MCF 10A (cell line): ENCODE measurements at regions of chr20 and their contacts with region 1.

Region 1: GRCh38 chr20:47501483-47502270 is at the start of gene NCOA3:
- DNase-seq: peak; percentile 95
- H3K4me3 Mint-ChIP-seq: peak within 1 kb of the TSS; percentile 94
- H3K27ac Mint-ChIP-seq: peak within 1 kb of the TSS; percentile 95
- H3K4me1 Mint-ChIP-seq: peaks cover 24% of the 10 kb centered on the region
- H3K27me3 Mint-ChIP-seq: no peaks in the 10 kb centered on the region
- CTCF ChIP-seq: peak; percentile 41
- total RNA-seq, gene NCOA3: 61.4 and 68.6 TPM in 2 replicates

Region 2: DNA sequence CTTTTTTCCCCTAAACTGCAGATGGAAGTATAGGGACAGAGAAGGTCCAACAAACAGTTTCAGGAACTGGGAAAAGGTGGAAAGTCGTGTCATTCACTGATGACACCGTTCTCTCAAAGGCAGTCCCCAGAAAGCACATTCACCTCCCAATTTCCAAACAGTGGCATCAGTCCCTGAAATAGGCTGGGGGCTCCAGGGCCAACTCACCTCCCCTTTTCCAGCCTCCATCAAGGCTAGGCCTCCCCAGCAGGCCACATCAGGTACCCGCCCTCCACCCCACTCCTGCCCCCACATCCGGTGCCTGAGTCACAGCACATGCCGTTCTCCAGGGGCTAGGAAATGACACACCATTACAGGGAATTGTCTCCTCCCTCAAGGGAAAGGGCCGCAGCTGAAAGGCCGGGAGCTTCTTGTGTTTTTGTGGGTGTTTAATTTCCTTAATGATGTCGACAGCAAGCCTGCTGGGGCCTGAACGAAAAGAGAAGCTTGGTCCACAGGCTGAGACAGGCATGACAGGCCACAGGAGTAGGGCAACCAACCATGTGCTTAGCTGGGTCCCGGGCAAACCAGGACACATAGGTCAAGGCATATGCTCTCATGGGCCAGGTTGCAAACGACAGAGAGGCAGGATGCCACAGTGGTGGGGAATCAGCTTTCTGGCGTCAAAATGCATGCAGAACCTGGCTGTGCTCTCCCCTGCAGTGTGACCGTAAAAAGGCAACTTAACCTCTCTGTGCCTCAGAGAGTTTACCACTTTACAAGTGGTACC is 184.4 kb before region 1 on chr20:
- CTCF ChIA-PET with region 1: no interaction called
- POLR2A ChIA-PET with region 1: interaction called, 29 read pairs
- intact Hi-C with region 1: no loop called
- DNase-seq: peak; percentile 100
- H3K4me3 Mint-ChIP-seq: peak overlapping the region; percentile 65
- H3K27ac Mint-ChIP-seq: peak overlapping the region; percentile 94
- H3K4me1 Mint-ChIP-seq: peaks cover 65% of the 10 kb centered on the region
- H3K27me3 Mint-ChIP-seq: no peaks in the 10 kb centered on the region
- CTCF ChIP-seq: no peak

Region 3: GRCh38 chr20:47421076-47421475 is 80.6 kb before region 1 on chr20:
- CTCF ChIA-PET with region 1: no interaction called
- POLR2A ChIA-PET with region 1: no interaction called
- intact Hi-C with region 1: no loop called
- DNase-seq: no peak
- H3K4me3 Mint-ChIP-seq: no peak overlapping the region
- H3K27ac Mint-ChIP-seq: no peak overlapping the region
- H3K4me1 Mint-ChIP-seq: peaks cover 7% of the 10 kb centered on the region
- H3K27me3 Mint-ChIP-seq: no peaks in the 10 kb centered on the region
- CTCF ChIP-seq: no peak

Region 4: DNA sequence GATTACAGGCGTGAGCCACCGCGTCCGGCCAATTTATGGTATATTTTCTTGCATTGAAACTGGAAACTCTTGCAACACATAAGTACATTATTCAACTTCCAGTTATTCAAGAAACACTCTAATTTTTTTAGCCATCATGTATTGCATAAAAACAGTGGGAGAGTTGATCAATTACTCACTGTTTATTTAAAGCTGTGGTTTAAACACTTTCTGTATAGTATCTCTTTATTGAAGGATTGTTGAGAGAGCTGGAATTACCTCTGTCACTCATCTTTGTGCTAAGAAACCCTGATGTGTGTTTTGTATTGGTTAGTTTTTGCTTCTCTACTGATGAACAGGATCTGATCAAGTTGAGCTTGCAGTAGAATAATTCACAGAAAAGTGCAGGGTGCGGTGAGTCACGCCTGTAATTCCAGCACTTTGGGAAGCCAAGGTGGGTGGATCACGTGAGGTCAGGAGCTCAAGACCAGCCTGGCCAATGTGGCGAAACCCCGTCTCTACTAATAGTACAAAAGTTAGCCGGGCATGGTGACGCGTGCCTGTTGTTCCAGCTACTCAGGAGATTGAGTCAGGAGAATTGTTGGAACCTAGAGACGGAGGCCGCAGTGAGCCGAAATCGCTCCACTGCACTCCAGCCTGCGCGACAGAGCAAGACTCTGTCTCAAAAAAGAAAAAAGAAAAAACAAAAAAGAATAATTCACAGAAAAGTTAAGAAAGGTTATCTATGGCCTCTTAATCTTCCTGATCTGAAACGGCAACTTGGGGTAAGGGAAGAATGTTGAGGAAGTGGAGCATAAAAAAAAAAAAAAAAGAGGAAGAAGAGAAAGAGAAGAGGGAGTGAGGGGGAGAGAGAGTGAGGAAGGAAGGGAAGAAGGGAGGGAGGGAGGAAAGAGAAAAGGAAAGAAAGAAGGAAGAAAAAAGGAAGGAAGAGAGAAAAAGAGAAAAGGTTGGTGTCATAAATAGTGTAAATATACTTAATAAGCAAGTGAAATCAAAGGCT is 69.2 kb before region 1 on chr20:
- CTCF ChIA-PET with region 1: interaction called, 5 read pairs
- POLR2A ChIA-PET with region 1: interaction called, 142 read pairs
- intact Hi-C with region 1: loop called (anchors 1 kb)
- DNase-seq: peak; percentile 94
- H3K4me3 Mint-ChIP-seq: peak overlapping the region; percentile 66
- H3K27ac Mint-ChIP-seq: peak overlapping the region; percentile 99
- H3K4me1 Mint-ChIP-seq: peaks cover 27% of the 10 kb centered on the region
- H3K27me3 Mint-ChIP-seq: no peaks in the 10 kb centered on the region
- CTCF ChIP-seq: no peak

Region 5: GRCh38 chr20:47487175-47487917 is 14.3 kb before region 1 on chr20:
- CTCF ChIA-PET with region 1: interaction called, 18 read pairs
- POLR2A ChIA-PET with region 1: interaction called, 192 read pairs
- intact Hi-C with region 1: no loop called
- DNase-seq: no peak
- H3K4me3 Mint-ChIP-seq: no peak overlapping the region
- H3K27ac Mint-ChIP-seq: peak overlapping the region; percentile 7
- H3K4me1 Mint-ChIP-seq: peaks cover 9% of the 10 kb centered on the region
- H3K27me3 Mint-ChIP-seq: no peaks in the 10 kb centered on the region
- CTCF ChIP-seq: no peak

Region 6: DNA sequence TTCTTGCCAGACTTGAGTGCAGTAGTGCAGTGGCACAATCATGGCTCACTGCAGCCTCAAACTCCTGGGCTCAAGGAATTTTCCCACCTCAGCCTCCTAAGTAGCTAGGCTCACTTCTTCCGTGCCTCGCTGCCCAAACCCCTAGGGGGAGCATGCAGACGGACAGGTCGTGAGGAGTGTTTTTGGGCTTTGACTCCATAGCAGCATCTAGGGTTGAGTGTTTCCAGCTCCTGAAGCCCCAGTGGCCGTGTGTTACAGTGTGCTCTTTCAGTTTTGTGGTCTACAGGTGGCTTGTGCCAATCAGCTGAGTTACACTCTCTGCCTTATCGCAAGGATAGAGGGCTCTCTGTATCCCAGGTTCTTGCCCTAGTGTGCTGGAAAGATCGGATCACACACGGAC is 33.4 kb after region 1 on chr20:
- CTCF ChIA-PET with region 1: no interaction called
- POLR2A ChIA-PET with region 1: interaction called, 10 read pairs
- intact Hi-C with region 1: no loop called
- DNase-seq: no peak
- H3K4me3 Mint-ChIP-seq: no peak overlapping the region
- H3K27ac Mint-ChIP-seq: no peak overlapping the region
- H3K4me1 Mint-ChIP-seq: peaks cover 9% of the 10 kb centered on the region
- H3K27me3 Mint-ChIP-seq: no peaks in the 10 kb centered on the region
- CTCF ChIP-seq: no peak

Region 7: DNA sequence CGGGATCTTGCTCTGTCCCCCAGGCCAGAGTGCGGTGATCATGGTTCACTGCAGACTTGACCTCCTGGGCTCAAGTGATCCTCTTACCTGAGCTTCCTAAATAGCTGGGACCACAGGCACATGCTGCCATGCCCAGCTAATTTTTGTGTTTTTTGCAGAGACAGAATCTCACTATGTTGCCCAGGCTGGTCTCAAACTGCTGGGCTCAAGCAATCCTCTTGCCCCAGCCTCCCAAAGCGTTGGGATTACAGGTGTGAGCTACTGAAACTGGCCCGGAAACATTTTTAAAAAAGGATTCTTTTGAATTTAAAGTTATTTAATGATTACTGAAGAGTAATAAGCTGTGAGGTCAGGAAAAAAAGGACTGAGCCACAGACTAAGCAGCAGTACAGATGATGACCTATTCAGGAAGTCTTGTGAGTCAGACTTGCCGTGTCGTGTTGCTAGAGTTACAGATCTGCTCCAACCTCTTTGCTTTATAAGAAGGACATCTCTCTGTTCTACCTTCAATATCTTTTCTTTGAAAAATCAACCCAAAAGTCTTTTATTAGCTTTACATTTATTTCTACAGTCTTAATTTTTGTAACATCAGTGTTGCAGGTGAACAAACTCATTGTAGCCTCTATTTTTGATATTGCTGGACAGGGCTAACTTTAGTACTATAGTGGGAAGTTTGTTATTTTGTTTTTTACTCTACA is 108.7 kb after region 1 on chr20:
- CTCF ChIA-PET with region 1: interaction called, 5 read pairs
- POLR2A ChIA-PET with region 1: interaction called, 15 read pairs
- intact Hi-C with region 1: no loop called
- DNase-seq: peak; percentile 66
- H3K4me3 Mint-ChIP-seq: no peak overlapping the region
- H3K27ac Mint-ChIP-seq: peak overlapping the region; percentile 47
- H3K4me1 Mint-ChIP-seq: peaks cover 22% of the 10 kb centered on the region
- H3K27me3 Mint-ChIP-seq: no peaks in the 10 kb centered on the region
- CTCF ChIP-seq: no peak

Region 8: GRCh38 chr20:47772995-47773716 is 271.5 kb after region 1 on chr20:
- CTCF ChIA-PET with region 1: no interaction called
- POLR2A ChIA-PET with region 1: no interaction called
- intact Hi-C with region 1: no loop called
- DNase-seq: no peak
- H3K4me3 Mint-ChIP-seq: no peak overlapping the region
- H3K27ac Mint-ChIP-seq: peak overlapping the region; percentile 57
- H3K4me1 Mint-ChIP-seq: peaks cover 22% of the 10 kb centered on the region
- H3K27me3 Mint-ChIP-seq: no peaks in the 10 kb centered on the region
- CTCF ChIP-seq: no peak